ENCODE measurements at regions of chr4 and their contacts with region 1.

Region 1: DNA sequence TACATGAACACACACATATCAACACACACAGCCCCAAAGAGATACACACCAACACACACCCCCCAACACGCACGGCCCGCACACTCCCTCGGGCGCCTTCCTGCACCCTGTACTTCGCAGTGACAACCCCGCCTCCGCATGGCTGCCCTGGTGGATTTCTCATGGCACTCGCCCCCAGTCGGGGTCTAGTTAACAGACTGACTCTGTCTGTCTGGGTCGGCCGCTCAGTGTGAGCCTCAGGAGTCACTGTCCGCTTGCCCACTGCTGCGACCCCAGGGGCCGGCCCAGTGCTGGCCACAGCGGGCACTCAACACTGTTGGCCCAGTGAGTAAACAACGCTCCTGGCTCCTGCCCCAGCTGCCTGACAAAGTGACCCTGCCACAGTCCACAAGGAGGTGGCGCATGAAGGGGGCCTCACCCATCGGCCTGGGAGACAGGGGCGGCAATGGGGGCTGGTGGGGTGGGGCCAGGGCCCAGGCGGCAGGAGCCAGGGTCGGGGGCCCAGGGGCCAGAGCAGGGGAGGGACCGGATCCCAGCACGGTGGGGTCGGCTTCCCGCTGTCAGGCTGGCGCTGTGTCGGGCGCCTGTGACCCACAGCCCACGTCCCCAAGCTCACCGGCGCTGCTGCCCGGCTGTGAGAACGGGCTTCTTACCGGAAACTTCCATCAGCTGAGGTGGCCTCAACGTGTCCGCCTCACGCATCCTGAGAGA is 40.2 kb upstream of the MAN2B2 start:
- DNase-seq: no peak
- H3K4me3 ChIP-seq: no peak overlapping the region
- H3K27ac ChIP-seq: peak overlapping the region in 10 of 59 donors; percentile 1 to 51 (median 23)
- H3K27me3 ChIP-seq: peaks cover 0 to 7% (median 0%) of the 10 kb centered on the region in 45 donors
- CTCF ChIP-seq: no peak

Region 2: DNA sequence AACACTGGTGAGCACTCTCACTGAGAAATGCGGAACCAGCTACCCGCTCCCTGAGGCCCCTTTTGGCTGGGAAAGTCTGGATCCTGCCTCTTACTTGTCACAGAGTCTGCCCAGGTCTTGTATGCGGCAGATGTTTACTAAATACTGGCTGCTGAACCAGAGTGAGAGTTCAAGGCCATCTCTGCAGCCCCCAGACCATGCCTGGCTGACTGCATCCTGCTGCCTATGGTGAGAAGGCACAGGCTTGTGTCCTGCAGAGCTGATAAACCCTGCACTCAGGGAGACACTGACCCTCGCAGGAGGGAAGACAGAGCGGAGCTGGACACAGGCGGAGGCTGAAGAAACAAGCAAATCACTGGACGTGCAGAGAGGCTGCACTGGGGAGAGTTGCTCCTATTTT is 380.9 kb before region 1 on chr4:
- intact Hi-C with region 1: no loop called
- DNase-seq: no peak
- H3K4me3 ChIP-seq: no peak overlapping the region
- H3K27ac ChIP-seq: peak overlapping the region in 13 of 59 donors; percentile 8 to 69 (median 42)
- H3K27me3 ChIP-seq: peaks cover 0 to 3% (median 0%) of the 10 kb centered on the region in 45 donors
- CTCF ChIP-seq: no peak

Region 3: DNA sequence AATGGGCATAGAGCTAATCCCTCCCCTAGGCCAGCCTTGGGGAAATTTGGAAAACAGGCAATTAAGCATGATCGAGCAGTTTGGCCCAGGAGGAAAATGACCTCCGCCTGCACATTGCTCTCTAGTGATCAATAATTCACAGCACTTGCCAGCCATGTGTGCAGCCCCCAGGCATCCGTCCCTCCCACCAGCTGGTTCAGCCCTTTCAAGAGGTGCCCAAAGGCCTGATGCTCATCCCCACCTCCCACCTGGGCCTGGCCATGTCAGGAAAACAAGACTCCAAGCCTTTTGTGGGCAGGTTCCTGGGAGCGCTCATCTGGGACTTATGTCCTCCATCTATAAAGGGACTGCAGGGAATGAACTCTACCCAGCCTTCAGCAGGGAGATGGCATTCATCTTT is 44.8 kb before region 1 on chr4:
- intact Hi-C with region 1: loop called in 1 of 2 experiments (anchors 5 kb)
- DNase-seq: no peak
- H3K4me3 ChIP-seq: no peak overlapping the region
- H3K27ac ChIP-seq: no peak overlapping the region
- H3K27me3 ChIP-seq: peaks cover 0 to 3% (median 0%) of the 10 kb centered on the region in 45 donors
- CTCF ChIP-seq: no peak

Region 4: GRCh38 chr4:6909073-6909965 is 374.5 kb after region 1 on chr4 and contains the start of gene TBC1D14:
- intact Hi-C with region 1: no loop called
- DNase-seq: peak; percentile 79 to 91 (median 85)
- H3K4me3 ChIP-seq: peak within 1 kb of the TSS; percentile 59 to 99 (median 83)
- H3K27ac ChIP-seq: peak within 1 kb of the TSS; percentile 76 to 99 (median 96)
- H3K27me3 ChIP-seq: no peaks in the 10 kb centered on the region
- CTCF ChIP-seq: peak in 47 of 56 donors; percentile 15 to 69 (median 39)
- total RNA-seq, gene TBC1D14: 44.0 to 85.9 (median 62.0) TPM